ENCODE measurements at regions of chr6 and their contacts with region 1.

Region 1: GRCh38 chr6:117602151-117602898 is at the start of gene GOPC:
- DNase-seq: peak; percentile 92 to 100
- ATAC-seq: peak; percentile 93 to 99 (median 94)
- H3K4me3 ChIP-seq: peak within 1 kb of the TSS; percentile 69
- H3K4me3 Mint-ChIP-seq: peak within 1 kb of the TSS; percentile 98
- H3K27ac ChIP-seq: peak within 1 kb of the TSS; percentile 78
- H3K27ac Mint-ChIP-seq: peak within 1 kb of the TSS; percentile 97 to 99
- H3K4me1 ChIP-seq: peaks cover 22% of the 10 kb centered on the region
- H3K4me1 Mint-ChIP-seq: peaks cover 52 to 53% of the 10 kb centered on the region in 2 donors
- H3K27me3 ChIP-seq: no peaks in the 10 kb centered on the region
- H3K27me3 Mint-ChIP-seq: no peaks in the 10 kb centered on the region
- CTCF ChIP-seq: peak; percentile 15
- total RNA-seq, gene GOPC: 17.5 to 27.7 (median 20.4) TPM

Region 2: GRCh38 chr6:117265410-117266256 is 336.7 kb before region 1 on chr6 and contains the start of gene VGLL2:
- intact Hi-C with region 1: no loop called
- DNase-seq: no peak
- ATAC-seq: no peak
- H3K4me3 ChIP-seq: no peak within 1 kb of the TSS
- H3K4me3 Mint-ChIP-seq: peak within 1 kb of the TSS; percentile 28
- H3K27ac ChIP-seq: no peak within 1 kb of the TSS
- H3K27ac Mint-ChIP-seq: no peak within 1 kb of the TSS
- H3K4me1 ChIP-seq: peaks cover 16% of the 10 kb centered on the region
- H3K4me1 Mint-ChIP-seq: peaks cover 0 to 14% of the 10 kb centered on the region in 2 donors
- H3K27me3 ChIP-seq: peaks cover 72% of the 10 kb centered on the region
- H3K27me3 Mint-ChIP-seq: peaks cover 63 to 79% of the 10 kb centered on the region in 2 donors
- CTCF ChIP-seq: no peak
- total RNA-seq, gene VGLL2: not detected

Region 3: DNA sequence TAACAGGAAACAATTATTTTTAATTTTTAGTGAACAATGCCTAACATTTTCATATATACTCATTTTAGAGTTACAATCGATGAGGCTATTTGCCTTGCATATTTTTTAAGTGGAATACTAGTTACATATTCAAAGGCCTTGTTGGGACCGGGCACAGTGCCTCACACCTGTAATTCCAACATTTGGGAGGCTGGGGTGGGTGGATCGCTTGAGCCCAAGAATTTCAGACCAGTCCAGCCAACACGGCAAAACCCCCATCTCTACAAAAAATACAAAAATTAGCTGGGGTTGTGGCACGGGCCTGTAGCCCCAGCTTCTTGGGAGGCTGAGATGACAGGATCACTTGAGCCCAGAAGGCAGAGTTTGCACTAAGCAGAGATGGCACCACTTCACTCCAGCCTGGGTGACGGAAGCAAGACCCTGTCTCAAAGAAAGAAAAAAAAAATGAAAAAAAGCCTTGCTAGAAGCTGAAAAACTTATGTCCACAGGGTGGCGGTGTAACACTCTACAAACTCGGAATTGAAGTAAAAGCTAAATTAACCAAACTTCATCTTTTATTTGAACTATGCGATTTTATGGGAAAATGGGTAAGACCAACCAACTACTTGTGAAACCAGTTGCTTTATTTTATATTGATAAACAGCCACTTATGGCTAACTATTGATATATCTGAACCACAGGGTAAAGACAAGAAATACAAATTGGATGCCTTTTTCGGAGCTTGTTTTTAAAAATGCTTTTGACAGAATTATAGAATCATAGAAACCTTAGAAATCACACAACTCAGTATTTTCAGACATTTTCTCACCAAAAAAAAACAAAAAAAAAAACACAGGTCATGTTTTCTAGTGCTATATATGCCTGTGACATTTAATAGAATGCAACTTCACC is 152.5 kb before region 1 on chr6:
- intact Hi-C with region 1: loop called (anchors 1 kb)
- DNase-seq: peak; percentile 33 to 84
- ATAC-seq: peak in 2 of 3 donors; percentile 58 to 73
- H3K4me3 ChIP-seq: no peak overlapping the region
- H3K4me3 Mint-ChIP-seq: no peak overlapping the region
- H3K27ac ChIP-seq: no peak overlapping the region
- H3K27ac Mint-ChIP-seq: no peak overlapping the region
- H3K4me1 ChIP-seq: no peaks in the 10 kb centered on the region
- H3K4me1 Mint-ChIP-seq: no peaks in the 10 kb centered on the region
- H3K27me3 ChIP-seq: peaks cover 3% of the 10 kb centered on the region
- H3K27me3 Mint-ChIP-seq: peaks cover 18 to 27% of the 10 kb centered on the region in 2 donors
- CTCF ChIP-seq: peak; percentile 89

Region 4: GRCh38 chr6:117482240-117483003 is 119.9 kb before region 1 on chr6 and contains the start of gene DCBLD1:
- intact Hi-C with region 1: loop called (anchors 1 kb)
- DNase-seq: peak; percentile 65 to 69
- ATAC-seq: peak; percentile 83 to 87 (median 84)
- H3K4me3 ChIP-seq: peak within 1 kb of the TSS; percentile 91
- H3K4me3 Mint-ChIP-seq: peak within 1 kb of the TSS; percentile 99
- H3K27ac ChIP-seq: no peak within 1 kb of the TSS
- H3K27ac Mint-ChIP-seq: peak within 1 kb of the TSS; percentile 78 to 87
- H3K4me1 ChIP-seq: peaks cover 20% of the 10 kb centered on the region
- H3K4me1 Mint-ChIP-seq: peaks cover 16 to 31% of the 10 kb centered on the region in 2 donors
- H3K27me3 ChIP-seq: no peaks in the 10 kb centered on the region
- H3K27me3 Mint-ChIP-seq: no peaks in the 10 kb centered on the region
- CTCF ChIP-seq: no peak
- total RNA-seq, gene DCBLD1: 8.4 to 16.1 (median 13.0) TPM

Region 5: DNA sequence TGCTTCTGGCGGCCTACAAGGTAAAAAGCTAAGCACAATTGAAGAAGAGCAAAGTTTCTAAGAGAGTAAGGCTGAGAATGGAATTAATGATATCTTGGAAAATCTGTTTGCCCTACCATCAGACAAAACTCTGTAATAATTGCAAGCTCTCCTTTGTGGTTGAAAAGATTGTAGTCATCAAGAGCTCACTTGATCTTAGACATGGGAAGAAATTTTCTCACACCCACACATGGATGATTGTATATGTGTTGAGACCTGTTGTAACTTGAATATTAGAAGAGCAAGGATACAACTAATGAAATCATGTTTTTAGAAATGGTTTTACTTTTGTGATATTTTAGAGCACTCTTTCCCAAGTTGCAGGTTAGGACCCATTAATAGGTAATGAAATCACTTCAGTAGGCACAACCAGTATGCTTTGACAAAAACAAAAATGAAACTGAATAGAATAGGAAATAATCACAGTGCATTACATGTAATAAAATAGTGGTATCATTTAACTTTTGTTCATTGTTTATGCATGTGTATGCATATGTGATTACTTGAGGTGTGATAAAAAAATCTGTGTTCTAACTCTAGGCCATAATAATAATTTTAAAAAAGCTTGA is 105.8 kb before region 1 on chr6:
- intact Hi-C with region 1: no loop called
- DNase-seq: no peak
- ATAC-seq: peak in 2 of 3 donors; percentile 35 to 46
- H3K4me3 ChIP-seq: no peak overlapping the region
- H3K4me3 Mint-ChIP-seq: peak overlapping the region; percentile 43
- H3K27ac ChIP-seq: no peak overlapping the region
- H3K27ac Mint-ChIP-seq: peak overlapping the region; percentile 51 to 60
- H3K4me1 ChIP-seq: no peaks in the 10 kb centered on the region
- H3K4me1 Mint-ChIP-seq: peaks cover 40 to 43% of the 10 kb centered on the region in 2 donors
- H3K27me3 ChIP-seq: no peaks in the 10 kb centered on the region
- H3K27me3 Mint-ChIP-seq: no peaks in the 10 kb centered on the region
- CTCF ChIP-seq: no peak

Region 6: GRCh38 chr6:117615894-117616390 is 13.6 kb after region 1 on chr6:
- intact Hi-C with region 1: loop called (anchors 1 kb)
- DNase-seq: no peak
- ATAC-seq: no peak
- H3K4me3 ChIP-seq: no peak overlapping the region
- H3K4me3 Mint-ChIP-seq: peak overlapping the region; percentile 64
- H3K27ac ChIP-seq: peak overlapping the region; percentile 81
- H3K27ac Mint-ChIP-seq: peak overlapping the region; percentile 93 to 95
- H3K4me1 ChIP-seq: peaks cover 29% of the 10 kb centered on the region
- H3K4me1 Mint-ChIP-seq: peaks cover 60 to 65% of the 10 kb centered on the region in 2 donors
- H3K27me3 ChIP-seq: no peaks in the 10 kb centered on the region
- H3K27me3 Mint-ChIP-seq: no peaks in the 10 kb centered on the region
- CTCF ChIP-seq: no peak

Region 7: GRCh38 chr6:118893807-118894424 is 1291.6 kb after region 1 on chr6 and contains the start of gene ASF1A:
- intact Hi-C with region 1: loop called (anchors 10 kb)
- DNase-seq: peak; percentile 92 to 97
- ATAC-seq: peak; percentile 72 to 87 (median 73)
- H3K4me3 ChIP-seq: peak within 1 kb of the TSS; percentile 91
- H3K4me3 Mint-ChIP-seq: peak within 1 kb of the TSS; percentile 100
- H3K27ac ChIP-seq: peak within 1 kb of the TSS; percentile 88
- H3K27ac Mint-ChIP-seq: peak within 1 kb of the TSS; percentile 97 to 99
- H3K4me1 ChIP-seq: peaks cover 14% of the 10 kb centered on the region
- H3K4me1 Mint-ChIP-seq: peaks cover 54 to 61% of the 10 kb centered on the region in 2 donors
- H3K27me3 ChIP-seq: no peaks in the 10 kb centered on the region
- H3K27me3 Mint-ChIP-seq: no peaks in the 10 kb centered on the region
- CTCF ChIP-seq: no peak
- total RNA-seq, gene ASF1A: 9.2 to 14.5 (median 10.8) TPM

Measured in natural killer cell (primary cell).